Activated naive CD8-positive, alpha-beta T cell treated with anti-CD3 and anti-CD28 coated beads, Interleukin-2, amount 10 ng/mL, durations not matched to agents 7 days and 5 days (primary cell): ENCODE measurements at regions of chr3 and their contacts with region 1.

Region 1: GRCh38 chr3:56915966-56916586 is 114.3 kb upstream of the ARHGEF3 start:
- DNase-seq: peak; percentile 77
- ATAC-seq: peak; percentile 93
- H3K4me3 Mint-ChIP-seq: peak overlapping the region; percentile 89
- H3K27ac Mint-ChIP-seq: peak overlapping the region; percentile 96
- H3K4me1 Mint-ChIP-seq: peaks cover 65% of the 10 kb centered on the region
- H3K27me3 Mint-ChIP-seq: no peaks in the 10 kb centered on the region

Region 2: DNA sequence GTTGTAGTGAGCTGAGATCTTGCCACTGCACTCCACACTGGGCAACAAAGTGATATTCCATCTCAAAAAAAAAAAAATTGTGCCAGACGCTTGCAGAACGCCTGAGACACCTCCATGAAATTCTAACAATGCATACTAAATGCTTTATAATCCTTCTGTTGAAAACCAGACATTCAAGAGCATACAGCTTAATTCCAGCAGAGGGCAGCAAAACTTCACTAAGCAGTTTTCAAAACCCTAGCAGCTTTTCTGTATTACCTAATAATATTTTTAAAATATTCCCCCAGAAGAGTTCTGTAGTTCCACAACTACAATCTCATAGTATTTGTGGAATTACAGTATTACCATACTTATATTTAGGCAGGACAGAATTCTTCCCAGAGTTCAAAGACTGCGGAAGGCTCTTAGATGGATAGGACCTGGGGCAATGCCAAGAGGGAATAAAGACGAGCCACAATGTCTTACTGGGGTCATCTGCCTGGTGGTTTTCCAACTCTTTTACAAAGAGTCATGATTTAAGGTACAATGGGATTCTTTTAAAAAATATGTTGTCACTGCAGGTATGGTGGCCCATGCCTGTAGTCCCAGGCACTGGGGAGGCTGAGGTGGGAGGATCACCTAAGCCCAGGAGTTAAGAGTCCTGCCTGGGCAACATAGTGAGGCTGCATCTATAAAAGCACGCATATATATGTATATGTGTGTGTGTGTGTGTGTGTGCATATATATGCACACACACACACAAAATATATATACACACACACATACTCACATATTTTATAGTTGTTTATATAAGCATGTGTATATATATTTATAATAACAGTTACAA is 213.4 kb before region 1 on chr3:
- POLR2A ChIA-PET with region 1: interaction called, 16 read pairs
- DNase-seq: no peak
- ATAC-seq: peak; percentile 40
- H3K4me3 Mint-ChIP-seq: no peak overlapping the region
- H3K27ac Mint-ChIP-seq: peak overlapping the region; percentile 59
- H3K4me1 Mint-ChIP-seq: peaks cover 29% of the 10 kb centered on the region
- H3K27me3 Mint-ChIP-seq: no peaks in the 10 kb centered on the region

Region 3: GRCh38 chr3:56753206-56753820 is 162.8 kb before region 1 on chr3:
- POLR2A ChIA-PET with region 1: interaction called, 12 read pairs
- DNase-seq: no peak
- ATAC-seq: peak; percentile 76
- H3K4me3 Mint-ChIP-seq: peak overlapping the region; percentile 91
- H3K27ac Mint-ChIP-seq: peak overlapping the region; percentile 87
- H3K4me1 Mint-ChIP-seq: peaks cover 61% of the 10 kb centered on the region
- H3K27me3 Mint-ChIP-seq: no peaks in the 10 kb centered on the region

Region 4: GRCh38 chr3:56837196-56837955 is 78.7 kb before region 1 on chr3:
- POLR2A ChIA-PET with region 1: no interaction called
- DNase-seq: no peak
- ATAC-seq: peak; percentile 61
- H3K4me3 Mint-ChIP-seq: no peak overlapping the region
- H3K27ac Mint-ChIP-seq: no peak overlapping the region
- H3K4me1 Mint-ChIP-seq: peaks cover 18% of the 10 kb centered on the region
- H3K27me3 Mint-ChIP-seq: no peaks in the 10 kb centered on the region

Region 5: GRCh38 chr3:56849698-56850097 is 66.4 kb before region 1 on chr3:
- POLR2A ChIA-PET with region 1: interaction called, 10 read pairs
- DNase-seq: no peak
- ATAC-seq: no peak
- H3K4me3 Mint-ChIP-seq: no peak overlapping the region
- H3K27ac Mint-ChIP-seq: no peak overlapping the region
- H3K4me1 Mint-ChIP-seq: peaks cover 7% of the 10 kb centered on the region
- H3K27me3 Mint-ChIP-seq: no peaks in the 10 kb centered on the region

Region 6: DNA sequence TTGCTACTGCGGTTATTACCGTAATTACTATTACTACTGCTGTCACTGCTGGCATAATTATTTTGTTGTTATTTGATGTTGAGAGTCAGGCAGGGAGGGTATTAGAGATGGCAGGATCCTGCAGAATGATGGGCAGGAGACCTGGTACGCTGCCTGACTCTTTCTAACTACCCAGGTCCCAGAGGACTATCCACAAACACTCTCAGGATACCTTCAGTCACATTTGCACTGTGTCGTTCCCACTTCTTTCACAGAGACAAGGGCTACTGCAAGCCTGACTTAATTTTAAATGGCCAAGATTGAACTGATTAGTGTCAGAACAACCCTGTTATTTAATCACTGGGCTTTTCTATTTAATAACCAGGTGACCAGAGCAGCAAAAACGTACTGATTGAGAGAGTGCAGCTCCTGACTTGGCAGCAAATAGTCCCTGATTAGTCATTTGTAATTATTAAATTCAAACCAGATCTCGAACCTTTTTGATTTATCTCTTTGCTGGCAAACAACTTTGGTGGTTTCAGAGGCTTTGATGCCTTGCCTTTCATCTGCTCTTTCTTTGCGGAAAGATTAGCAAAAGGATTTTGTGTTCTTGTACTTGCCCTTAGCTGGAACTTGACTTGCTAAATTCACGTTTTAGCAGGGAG is 25.5 kb before region 1 on chr3:
- POLR2A ChIA-PET with region 1: interaction called, 41 read pairs
- DNase-seq: no peak
- ATAC-seq: no peak
- H3K4me3 Mint-ChIP-seq: peak overlapping the region; percentile 16
- H3K27ac Mint-ChIP-seq: peak overlapping the region; percentile 45
- H3K4me1 Mint-ChIP-seq: peaks cover 69% of the 10 kb centered on the region
- H3K27me3 Mint-ChIP-seq: no peaks in the 10 kb centered on the region